Activated T-helper 1 cell treated with anti-CD3 and anti-CD28 coated beads, Interleukin-12 subunit alpha, Interleukin-12 subunit beta, Interleukin-2, Interleukin-4 antibody, amounts not matched to agents 30 ng/mL and 10 ng/mL and 1 ng/mL, durations not matched to agents 14 hours and 24 hours and 36 hours (primary cell): ENCODE measurements at regions of chr16 and their contacts with region 1.

Region 1: DNA sequence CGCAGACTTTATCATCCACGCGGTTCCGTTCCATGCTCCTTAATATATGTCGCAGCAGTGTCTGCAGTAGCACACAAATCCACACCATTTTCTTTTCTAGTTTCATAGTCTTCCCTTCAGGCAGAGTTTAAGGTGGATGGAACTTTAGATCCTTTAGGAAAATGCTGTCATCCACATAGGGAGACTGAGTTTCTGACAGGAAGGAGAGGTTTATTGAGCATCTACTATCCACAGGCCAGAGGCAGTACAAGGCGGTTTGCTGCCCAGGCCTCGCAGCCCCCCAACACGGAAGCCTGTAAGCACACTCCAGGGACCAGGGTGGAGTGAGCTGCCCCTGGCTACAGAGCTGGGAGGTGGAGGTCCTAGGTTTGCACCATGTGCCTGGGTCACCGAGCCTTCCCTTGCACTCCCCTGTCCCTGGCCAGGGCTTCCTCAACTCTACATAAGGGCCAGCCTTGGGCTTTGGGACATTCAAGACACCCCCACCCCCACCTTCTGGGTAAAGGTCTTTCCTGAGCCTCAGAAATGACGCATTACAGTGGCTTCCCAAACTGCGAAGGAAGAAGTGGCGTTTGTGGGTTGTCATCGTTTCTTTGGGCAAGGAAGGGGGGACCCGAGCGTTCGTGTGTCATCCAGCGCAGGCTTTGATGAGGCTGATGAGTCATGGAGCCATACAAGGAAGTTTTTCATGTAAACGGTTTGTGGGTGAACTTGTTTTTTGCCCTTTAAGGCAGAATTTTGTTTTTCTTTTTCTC is 146.5 kb upstream of the PLCG2 start:
- DNase-seq: peak; percentile 76
- H3K4me3 Mint-ChIP-seq: peak overlapping the region; percentile 80
- H3K27ac Mint-ChIP-seq: peak overlapping the region; percentile 98
- H3K4me1 Mint-ChIP-seq: peaks cover 67% of the 10 kb centered on the region
- H3K27me3 Mint-ChIP-seq: no peaks in the 10 kb centered on the region

Region 2: DNA sequence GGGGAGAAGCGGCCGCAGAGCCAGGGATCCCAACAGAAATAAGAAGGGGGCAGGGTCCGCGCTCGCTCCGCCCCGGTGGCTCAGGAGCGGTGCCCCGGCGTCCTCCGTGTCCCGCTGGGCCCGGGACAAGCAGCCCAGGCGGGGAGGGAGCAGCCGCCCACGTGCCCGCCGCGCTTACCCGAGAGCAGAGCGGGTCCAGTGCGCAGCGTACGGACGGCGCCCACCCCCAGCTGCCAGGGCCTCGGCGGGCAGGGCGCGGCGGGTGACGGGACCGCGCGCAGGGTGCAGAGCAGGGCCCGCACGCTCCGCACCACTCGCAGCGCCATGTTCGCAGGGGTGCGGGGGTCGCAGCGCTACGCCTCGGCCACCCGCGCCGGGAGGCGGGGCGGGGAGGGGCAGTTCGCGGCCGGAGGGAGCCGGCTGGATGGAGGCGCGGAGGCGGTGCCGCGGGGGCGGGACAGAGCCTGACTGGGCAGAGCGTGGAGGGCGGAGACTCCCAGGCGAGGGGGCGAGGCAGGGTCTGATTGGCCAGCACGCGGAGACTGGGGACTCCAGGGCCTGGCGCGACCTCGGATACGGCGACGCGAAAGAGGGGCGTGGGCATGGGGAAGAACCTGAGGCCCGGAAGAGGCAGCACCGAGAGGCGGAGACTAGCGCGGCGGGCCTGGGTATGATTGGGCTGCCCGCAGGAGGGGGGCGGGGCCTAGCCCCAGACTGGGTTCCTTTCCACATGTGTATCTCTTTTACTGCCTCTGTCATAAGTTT is 536.4 kb before region 1 on chr16 and contains the start of gene GCSH:
- intact Hi-C with region 1: loop called (anchors 5 kb)
- DNase-seq: peak; percentile 99
- H3K4me3 Mint-ChIP-seq: peak within 1 kb of the TSS; percentile 81
- H3K27ac Mint-ChIP-seq: peak within 1 kb of the TSS; percentile 46
- H3K4me1 Mint-ChIP-seq: peaks cover 6% of the 10 kb centered on the region
- H3K27me3 Mint-ChIP-seq: peaks cover 3% of the 10 kb centered on the region
- total RNA-seq, gene GCSH: 16.5 and 19.1 TPM in 2 replicates

Region 3: GRCh38 chr16:81616321-81617055 is 16.1 kb before region 1 on chr16:
- intact Hi-C with region 1: loop called (anchors 1 kb)
- DNase-seq: peak; percentile 70
- H3K4me3 Mint-ChIP-seq: peak overlapping the region; percentile 62
- H3K27ac Mint-ChIP-seq: peak overlapping the region; percentile 93
- H3K4me1 Mint-ChIP-seq: peaks cover 19% of the 10 kb centered on the region
- H3K27me3 Mint-ChIP-seq: no peaks in the 10 kb centered on the region

Region 4: DNA sequence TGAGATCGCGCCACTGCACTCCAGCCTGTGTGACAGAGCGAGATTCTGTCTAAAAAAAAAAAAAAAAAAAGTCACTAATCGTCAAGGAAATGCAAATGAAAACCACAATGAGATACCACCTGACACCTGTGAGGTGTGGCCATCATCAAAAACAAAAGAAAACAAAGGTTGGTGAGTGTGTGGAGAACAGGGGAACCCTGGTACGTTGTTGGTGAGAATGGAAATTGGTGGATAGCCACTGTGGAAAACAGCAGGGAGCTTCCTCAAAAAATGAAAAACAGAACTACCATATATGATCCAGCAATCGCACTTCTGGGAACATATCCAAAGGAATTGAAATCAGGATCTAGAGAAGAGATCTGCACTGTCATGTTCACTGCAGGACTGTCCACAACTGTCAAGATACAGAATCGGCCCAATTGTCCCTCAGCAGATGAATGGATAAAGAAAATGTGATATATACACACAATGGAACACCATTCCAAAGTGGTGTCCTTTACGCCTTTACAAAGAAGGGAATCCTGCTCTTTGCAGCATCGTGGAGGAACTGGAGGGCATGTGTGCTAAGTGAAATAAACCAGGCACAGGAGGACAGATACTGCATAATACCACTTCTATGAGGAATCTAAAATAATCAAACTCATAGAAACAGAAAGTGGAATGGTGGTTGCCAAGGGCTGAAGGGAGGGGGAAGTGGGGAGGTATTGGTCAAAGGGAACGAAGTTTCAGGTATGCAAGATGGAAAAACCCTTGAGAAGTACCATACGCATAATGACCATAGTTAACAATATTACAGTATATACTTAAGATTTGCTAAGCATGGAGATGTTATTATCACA is 83.0 kb after region 1 on chr16:
- intact Hi-C with region 1: loop called (anchors 5 kb)
- DNase-seq: peak; percentile 19
- H3K4me3 Mint-ChIP-seq: peak overlapping the region; percentile 63
- H3K27ac Mint-ChIP-seq: peak overlapping the region; percentile 50
- H3K4me1 Mint-ChIP-seq: peaks cover 46% of the 10 kb centered on the region
- H3K27me3 Mint-ChIP-seq: no peaks in the 10 kb centered on the region